ENCODE measurements at regions of chr6 and their contacts with region 1.

Region 1: DNA sequence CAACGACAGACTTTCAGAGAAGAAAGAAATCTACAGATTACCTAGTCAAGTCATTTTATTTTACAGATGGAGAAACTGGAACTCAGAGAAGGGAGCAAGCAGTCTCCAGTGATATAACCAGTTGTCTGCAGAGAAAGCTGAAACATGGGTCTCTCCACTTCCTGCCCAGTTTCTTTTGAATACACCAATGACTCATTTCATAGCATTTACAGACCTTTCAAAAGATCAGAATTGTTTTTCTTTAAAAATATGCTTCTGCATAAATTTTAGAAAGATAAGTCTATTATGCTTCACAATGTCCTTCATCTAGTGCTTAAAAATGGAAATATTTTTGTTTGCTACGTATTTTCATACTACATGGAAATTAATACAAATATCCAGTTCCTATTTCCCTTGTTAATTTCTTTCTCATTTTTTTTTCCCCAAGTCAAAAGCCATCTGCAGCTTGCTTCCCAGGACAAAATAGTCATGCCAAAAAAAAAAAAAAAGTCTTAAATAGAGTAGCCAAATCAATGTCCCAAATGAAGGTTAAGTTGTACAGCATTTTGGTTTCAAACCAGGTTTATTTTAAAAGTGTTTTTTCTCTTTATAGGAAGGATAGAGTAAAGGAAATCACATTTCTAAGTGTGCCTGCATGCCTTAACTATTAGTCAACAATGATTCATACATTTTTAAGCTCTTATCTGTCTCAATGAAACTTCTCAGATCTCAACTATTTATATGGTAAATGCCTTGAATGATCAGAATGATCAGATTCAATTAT is 36.9 kb downstream of the ARHGAP18 start:
- DNase-seq: peak; percentile 27
- H3K4me3 Mint-ChIP-seq: peak overlapping the region; percentile 63
- H3K27ac Mint-ChIP-seq: peak overlapping the region; percentile 71
- H3K4me1 Mint-ChIP-seq: peaks cover 32% of the 10 kb centered on the region
- H3K27me3 Mint-ChIP-seq: no peaks in the 10 kb centered on the region

Region 2: GRCh38 chr6:129454488-129454887 is 218.6 kb before region 1 on chr6:
- CTCF ChIA-PET with region 1: no interaction called
- intact Hi-C with region 1: loop called (anchors 5 kb)
- DNase-seq: no peak
- H3K4me3 Mint-ChIP-seq: no peak overlapping the region
- H3K27ac Mint-ChIP-seq: no peak overlapping the region
- H3K4me1 Mint-ChIP-seq: peaks cover 50% of the 10 kb centered on the region
- H3K27me3 Mint-ChIP-seq: no peaks in the 10 kb centered on the region

Region 3: GRCh38 chr6:129598244-129599187 is 74.5 kb before region 1 on chr6:
- CTCF ChIA-PET with region 1: interaction called, 4 read pairs
- intact Hi-C with region 1: loop called (anchors 1 kb)
- DNase-seq: no peak
- H3K4me3 Mint-ChIP-seq: no peak overlapping the region
- H3K27ac Mint-ChIP-seq: no peak overlapping the region
- H3K4me1 Mint-ChIP-seq: no peaks in the 10 kb centered on the region
- H3K27me3 Mint-ChIP-seq: no peaks in the 10 kb centered on the region

Region 4: GRCh38 chr6:129695373-129696027 is 22.4 kb after region 1 on chr6:
- CTCF ChIA-PET with region 1: interaction called, 5 read pairs
- intact Hi-C with region 1: loop called (anchors 1 kb)
- DNase-seq: peak; percentile 67
- H3K4me3 Mint-ChIP-seq: no peak overlapping the region
- H3K27ac Mint-ChIP-seq: no peak overlapping the region
- H3K4me1 Mint-ChIP-seq: peaks cover 17% of the 10 kb centered on the region
- H3K27me3 Mint-ChIP-seq: no peaks in the 10 kb centered on the region

Region 5: GRCh38 chr6:129748212-129748900 is 75.3 kb after region 1 on chr6:
- CTCF ChIA-PET with region 1: interaction called, 4 read pairs
- intact Hi-C with region 1: loop called (anchors 1 kb)
- DNase-seq: peak; percentile 81
- H3K4me3 Mint-ChIP-seq: peak overlapping the region; percentile 46
- H3K27ac Mint-ChIP-seq: peak overlapping the region; percentile 93
- H3K4me1 Mint-ChIP-seq: peaks cover 68% of the 10 kb centered on the region
- H3K27me3 Mint-ChIP-seq: no peaks in the 10 kb centered on the region

Region 6: GRCh38 chr6:130027948-130028347 is 354.9 kb after region 1 on chr6:
- CTCF ChIA-PET with region 1: no interaction called
- intact Hi-C with region 1: loop called (anchors 1 kb)
- DNase-seq: no peak
- H3K4me3 Mint-ChIP-seq: no peak overlapping the region
- H3K27ac Mint-ChIP-seq: peak overlapping the region; percentile 14
- H3K4me1 Mint-ChIP-seq: peaks cover 49% of the 10 kb centered on the region
- H3K27me3 Mint-ChIP-seq: no peaks in the 10 kb centered on the region